Activated T-helper 1 cell treated with anti-CD3 and anti-CD28 coated beads, Interleukin-12 subunit alpha, Interleukin-12 subunit beta, Interleukin-2, Interleukin-4 antibody, amounts not matched to agents 30 ng/mL and 10 ng/mL and 1 ng/mL, durations not matched to agents 14 hours and 24 hours and 36 hours (primary cell): ENCODE measurements at regions of chr14 and their contacts with region 1.

Region 1: DNA sequence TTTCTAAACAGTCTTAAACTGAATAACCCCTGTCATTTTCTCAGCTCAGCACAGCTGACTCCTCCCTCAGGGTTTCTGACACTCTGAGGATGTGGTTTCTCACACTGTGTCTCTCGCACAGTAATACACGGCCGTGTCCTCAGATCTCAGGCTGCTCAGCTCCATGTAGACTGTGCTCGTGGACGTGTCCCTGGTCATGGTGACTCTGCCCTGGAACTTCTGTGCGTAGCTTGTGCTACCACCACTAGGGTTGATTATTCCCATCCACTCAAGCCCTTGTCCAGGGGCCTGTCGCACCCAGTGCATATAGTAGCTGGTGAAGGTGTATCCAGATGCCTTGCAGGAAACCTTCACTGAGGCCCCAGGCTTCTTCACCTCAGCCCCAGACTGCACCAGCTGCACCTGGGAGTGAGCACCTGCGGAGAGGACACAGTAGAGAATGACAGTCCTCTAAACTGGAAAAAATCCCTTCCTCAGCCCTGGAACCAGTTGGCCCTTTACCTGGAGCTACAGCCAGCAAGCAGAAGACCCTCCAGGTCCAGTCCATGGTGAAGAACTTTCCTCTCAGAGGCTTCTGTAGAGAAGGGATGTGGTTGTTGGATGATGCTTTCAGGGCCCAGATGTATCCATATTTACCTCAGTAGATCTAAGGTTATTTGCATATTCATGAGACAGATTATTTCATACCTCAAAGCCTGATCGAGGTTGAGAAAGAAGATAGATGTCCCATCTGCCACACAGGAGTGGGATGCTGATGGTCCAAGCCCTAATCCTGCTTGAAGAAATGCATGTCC is 984.8 kb downstream of the TMEM121 start:
- DNase-seq: peak; percentile 60
- H3K4me3 Mint-ChIP-seq: peak overlapping the region; percentile 2
- H3K27ac Mint-ChIP-seq: peak overlapping the region; percentile 45
- H3K4me1 Mint-ChIP-seq: peaks cover 70% of the 10 kb centered on the region
- H3K27me3 Mint-ChIP-seq: peaks cover 23% of the 10 kb centered on the region

Region 2: GRCh38 chr14:106395456-106396050 is 115.7 kb before region 1 on chr14:
- intact Hi-C with region 1: no loop called
- DNase-seq: no peak
- H3K4me3 Mint-ChIP-seq: peak overlapping the region; percentile 70
- H3K27ac Mint-ChIP-seq: peak overlapping the region; percentile 94
- H3K4me1 Mint-ChIP-seq: peaks cover 58% of the 10 kb centered on the region
- H3K27me3 Mint-ChIP-seq: no peaks in the 10 kb centered on the region

Region 3: DNA sequence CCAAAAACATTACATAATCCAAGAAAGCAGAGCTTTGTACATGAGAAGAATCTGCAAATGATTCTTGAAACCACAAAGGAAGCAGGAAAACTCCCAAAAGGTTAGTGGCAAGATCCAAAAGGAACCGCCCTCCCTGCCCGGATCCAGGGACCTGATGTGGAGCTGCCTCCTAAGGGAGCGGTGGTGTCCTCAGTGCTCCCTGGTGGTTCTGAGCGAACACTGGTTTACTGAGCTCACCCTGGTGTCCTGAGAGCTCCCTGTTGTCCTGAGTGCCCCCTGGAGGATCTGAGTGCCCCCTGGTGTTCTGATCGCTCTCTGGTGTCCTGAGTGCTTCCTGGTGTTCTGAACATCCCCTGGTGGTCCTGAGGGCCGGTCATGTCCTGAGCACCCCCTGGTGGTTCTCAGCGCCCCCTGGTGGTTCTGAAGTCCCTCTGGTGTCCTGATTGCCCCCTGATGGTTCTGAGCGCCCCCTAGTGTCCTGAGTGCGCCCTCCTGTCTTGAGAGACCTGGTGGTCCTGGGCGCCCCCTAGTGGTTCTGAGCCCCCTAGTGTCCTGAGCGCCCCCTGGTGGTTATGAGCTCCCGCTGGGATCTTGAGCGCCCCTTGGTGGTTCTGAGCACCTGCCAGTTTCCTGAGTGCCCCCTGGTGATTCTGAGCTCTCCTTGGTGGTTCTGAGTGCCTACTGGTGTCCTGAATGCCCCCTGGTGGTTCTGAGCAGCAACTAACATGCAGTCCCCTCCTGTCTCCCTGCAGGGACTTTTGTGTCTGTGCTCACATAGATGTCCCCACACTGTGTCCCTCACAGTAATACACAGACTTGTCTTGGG is 93.8 kb before region 1 on chr14:
- intact Hi-C with region 1: loop called (anchors 5 kb)
- DNase-seq: peak; percentile 86
- H3K4me3 Mint-ChIP-seq: no peak overlapping the region
- H3K27ac Mint-ChIP-seq: no peak overlapping the region
- H3K4me1 Mint-ChIP-seq: peaks cover 15% of the 10 kb centered on the region
- H3K27me3 Mint-ChIP-seq: peaks cover 9% of the 10 kb centered on the region

Region 4: GRCh38 chr14:106493962-106494823 is 17.0 kb before region 1 on chr14:
- intact Hi-C with region 1: loop called (anchors 1 kb)
- DNase-seq: no peak
- H3K4me3 Mint-ChIP-seq: peak overlapping the region; percentile 71
- H3K27ac Mint-ChIP-seq: no peak overlapping the region
- H3K4me1 Mint-ChIP-seq: peaks cover 16% of the 10 kb centered on the region
- H3K27me3 Mint-ChIP-seq: peaks cover 13% of the 10 kb centered on the region

Region 5: DNA sequence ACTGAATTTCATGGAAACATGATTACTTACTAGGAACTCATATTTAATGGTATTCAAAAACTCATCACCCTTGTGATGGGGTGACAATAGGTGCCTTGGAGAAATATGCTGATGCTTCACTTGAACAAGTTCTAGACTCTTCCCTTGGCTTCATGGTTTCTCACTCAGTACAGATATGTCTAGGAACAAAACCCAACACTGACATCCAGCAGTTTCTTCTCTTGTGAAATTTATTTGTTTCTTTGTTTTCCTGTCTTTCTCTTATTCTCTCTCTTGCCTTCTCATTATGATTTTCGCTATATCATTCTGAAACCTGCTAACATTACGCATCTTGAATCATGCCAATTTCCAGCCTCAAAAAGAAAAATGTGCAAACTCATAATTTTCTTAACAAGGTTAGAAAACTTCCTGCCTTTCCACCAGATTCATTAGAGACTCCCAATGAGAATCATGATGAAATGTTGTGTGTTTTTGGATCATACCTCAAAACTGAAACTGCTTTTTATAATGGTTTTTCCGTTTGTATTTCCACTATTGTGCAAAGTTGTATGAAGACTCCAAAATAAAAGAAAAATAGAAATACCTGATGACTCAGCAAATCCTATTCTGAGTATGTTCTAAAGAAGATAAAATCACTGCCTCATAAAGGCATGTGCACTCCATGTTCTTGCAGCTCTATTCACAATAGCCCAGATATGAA is 36.7 kb after region 1 on chr14:
- intact Hi-C with region 1: loop called (anchors 2 kb)
- DNase-seq: no peak
- H3K4me3 Mint-ChIP-seq: no peak overlapping the region
- H3K27ac Mint-ChIP-seq: peak overlapping the region; percentile 31
- H3K4me1 Mint-ChIP-seq: peaks cover 12% of the 10 kb centered on the region
- H3K27me3 Mint-ChIP-seq: peaks cover 17% of the 10 kb centered on the region